ENCODE measurements at regions of chr6 and their contacts with region 1.

Region 1: DNA sequence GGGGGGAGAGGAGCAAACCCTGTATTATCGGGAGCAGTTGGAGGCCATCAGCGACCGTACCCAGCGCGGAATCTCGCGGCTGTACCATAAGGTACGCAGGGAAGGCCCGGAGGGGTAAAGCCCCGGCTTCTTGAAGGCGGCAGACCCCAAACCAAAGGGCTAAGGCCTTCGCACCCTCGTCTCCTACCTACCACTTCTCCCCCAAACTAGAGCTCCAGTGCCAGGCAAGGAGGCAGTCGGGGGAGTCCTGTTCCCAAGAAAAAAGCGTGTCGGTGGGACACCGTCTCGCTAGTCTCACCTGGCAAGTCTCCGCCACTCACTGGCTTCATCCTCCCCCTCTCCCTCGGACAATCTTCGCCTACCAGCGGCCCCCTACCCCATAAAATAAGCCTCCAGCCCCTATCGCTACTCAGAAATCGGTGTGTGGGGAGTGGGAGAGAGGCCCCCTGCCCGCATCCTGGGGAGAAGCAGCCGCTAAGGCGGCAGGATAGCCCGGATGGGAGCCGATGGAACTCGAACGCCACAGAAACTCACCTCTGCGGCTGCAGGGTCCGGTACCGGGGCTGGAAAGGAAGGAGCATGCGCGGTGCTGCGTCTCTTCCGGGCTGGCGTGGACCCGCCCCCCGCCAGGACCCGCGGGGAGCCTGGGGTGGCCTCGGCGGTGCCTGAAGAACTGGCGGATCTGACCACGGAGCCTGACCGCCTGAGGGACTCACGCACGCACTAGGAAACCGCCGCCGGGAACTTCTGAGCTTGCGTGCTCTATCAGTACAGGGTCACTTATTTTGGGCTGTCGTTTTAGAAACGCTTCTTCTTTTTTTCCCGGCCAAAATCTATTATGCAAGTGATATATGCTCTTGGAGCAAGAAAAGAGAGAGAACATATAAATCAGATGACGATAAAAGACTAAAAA is at the start of gene RPS10:
- DNase-seq: peak; percentile 84 to 94 (median 92)
- H3K4me3 ChIP-seq: peak within 1 kb of the TSS; percentile 37 to 91 (median 79)
- H3K27ac ChIP-seq: peak within 1 kb of the TSS; percentile 13 to 97 (median 90)
- H3K27me3 ChIP-seq: no peaks in the 10 kb centered on the region
- CTCF ChIP-seq: peak in 45 of 56 donors; percentile 6 to 63 (median 35)
- total RNA-seq, gene RPS10: 315 to 608 (median 413) TPM

Region 2: DNA sequence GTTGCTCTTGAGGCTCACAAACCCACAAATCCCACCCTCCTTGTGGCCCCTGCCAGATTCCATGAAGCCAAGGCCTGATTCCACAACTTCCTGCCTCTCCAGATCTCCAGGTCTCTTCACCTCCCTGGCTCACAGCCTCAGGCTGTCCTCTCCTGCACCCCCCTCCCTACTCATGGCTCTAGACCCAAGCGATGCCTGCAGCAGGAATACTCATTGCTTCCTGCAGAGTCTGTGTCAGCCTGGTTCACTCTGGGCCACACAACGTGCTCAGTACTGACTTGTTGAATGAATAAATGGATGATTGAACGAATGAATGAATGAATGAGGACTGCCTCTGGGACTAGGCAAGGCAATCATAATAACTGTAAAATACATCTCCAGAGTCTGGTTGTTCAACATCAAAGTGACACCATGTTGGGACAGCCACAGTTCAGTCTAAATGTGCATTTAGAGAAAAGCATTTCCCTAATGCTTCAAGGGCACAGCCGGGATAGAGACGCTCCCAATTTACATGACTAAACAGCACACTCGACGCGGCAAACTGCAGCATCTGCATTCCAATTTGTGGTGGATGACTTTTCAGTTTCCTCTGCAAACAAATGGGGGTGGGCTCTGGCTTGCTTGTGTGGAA is 419.7 kb before region 1 on chr6:
- intact Hi-C with region 1: no loop called
- DNase-seq: no peak
- H3K4me3 ChIP-seq: no peak overlapping the region
- H3K27ac ChIP-seq: no peak overlapping the region
- H3K27me3 ChIP-seq: peaks cover 0 to 15% (median 0%) of the 10 kb centered on the region in 45 donors
- CTCF ChIP-seq: no peak

Region 3: GRCh38 chr6:34526992-34527728 is 101.4 kb after region 1 on chr6:
- intact Hi-C with region 1: loop called in 1 of 2 experiments (anchors 5 kb)
- DNase-seq: peak; percentile 86 to 97 (median 90)
- H3K4me3 ChIP-seq: peak overlapping the region in 58 of 59 donors; percentile 8 to 62 (median 46)
- H3K27ac ChIP-seq: peak overlapping the region in 38 of 59 donors; percentile 1 to 71 (median 42)
- H3K27me3 ChIP-seq: no peaks in the 10 kb centered on the region
- CTCF ChIP-seq: peak in 54 of 56 donors; percentile 53 to 84 (median 72)

Region 4: GRCh38 chr6:34757687-34758274 is 332.0 kb after region 1 on chr6:
- intact Hi-C with region 1: loop called in 1 of 2 experiments (anchors 10 kb)
- DNase-seq: no peak
- H3K4me3 ChIP-seq: peak overlapping the region; percentile 62 to 99 (median 84)
- H3K27ac ChIP-seq: peak overlapping the region in 57 of 59 donors; percentile 21 to 98 (median 94)
- H3K27me3 ChIP-seq: no peaks in the 10 kb centered on the region
- CTCF ChIP-seq: no peak